Prostate gland (tissue), 2 donors: ENCODE measurements at regions of chr3 and their contacts with region 1.

Region 1: GRCh38 chr3:124878561-124879336 is 8.4 kb downstream of the ITGB5 start:
- DNase-seq: peak; percentile 62
- H3K4me3 ChIP-seq: no peak overlapping the region
- H3K27ac ChIP-seq: peak overlapping the region; percentile 44 to 51
- H3K4me1 ChIP-seq: peaks cover 6% of the 10 kb centered on the region
- H3K27me3 ChIP-seq: no peaks in the 10 kb centered on the region
- CTCF ChIP-seq: no peak
- POLR2A ChIP-seq: no peak

Region 2: DNA sequence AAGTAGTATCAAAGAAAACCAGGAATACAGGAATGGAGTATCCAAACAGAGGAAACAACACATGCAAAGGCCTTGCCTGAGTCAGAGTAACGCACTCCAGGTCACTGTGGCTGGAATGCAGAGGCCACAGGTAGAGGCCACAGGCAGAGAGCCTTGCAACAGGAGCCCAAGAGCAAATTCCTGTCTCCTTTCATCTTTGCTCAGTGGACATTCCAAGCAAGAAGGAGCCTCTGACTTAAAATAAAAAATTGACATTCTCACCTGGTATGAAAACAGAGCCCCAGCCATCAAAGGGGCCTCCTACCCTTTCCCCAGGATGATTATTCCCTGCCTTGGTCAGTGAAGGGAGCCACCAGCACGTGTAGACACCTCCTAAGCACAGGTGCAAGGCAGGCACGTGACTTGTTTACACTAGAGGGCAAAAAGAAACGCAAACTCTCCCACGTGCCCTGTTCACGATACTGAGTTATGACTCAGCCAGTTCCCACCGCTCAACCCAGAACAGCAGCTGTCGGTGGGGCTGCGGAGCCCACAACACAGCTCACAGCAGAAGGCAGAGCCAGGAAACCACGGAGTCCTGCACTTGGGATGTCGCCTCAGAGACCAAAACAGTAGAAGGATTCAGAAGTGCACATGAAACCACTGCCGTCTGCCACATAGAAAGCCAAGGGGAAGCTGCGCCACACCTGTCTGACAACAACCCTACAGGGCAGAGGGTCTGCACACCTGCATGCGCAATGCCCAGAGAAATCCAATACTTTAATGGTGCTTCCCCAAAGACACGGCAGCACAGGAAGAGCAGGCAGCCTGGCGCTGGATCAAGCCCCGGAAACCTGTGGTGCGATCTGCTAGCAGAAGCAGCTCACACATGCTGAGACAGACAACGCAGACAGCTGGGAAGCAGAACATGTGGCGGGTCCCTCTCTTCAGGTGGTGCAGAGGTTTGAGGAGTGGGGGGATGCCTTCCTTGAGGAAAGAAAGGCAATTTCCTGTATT is 43.7 kb before region 1 on chr3:
- intact Hi-C with region 1: loop called (anchors 5 kb)
- DNase-seq: peak; percentile 77
- H3K4me3 ChIP-seq: peak overlapping the region in 1 of 2 donors; percentile 5
- H3K27ac ChIP-seq: peak overlapping the region; percentile 59 to 71
- H3K4me1 ChIP-seq: peaks cover 24% of the 10 kb centered on the region
- H3K27me3 ChIP-seq: no peaks in the 10 kb centered on the region
- CTCF ChIP-seq: no peak
- POLR2A ChIP-seq: no peak